CD4-positive, alpha-beta T cell (primary cell): ENCODE measurements at regions of chr9 and their contacts with region 1.

Region 1: GRCh38 chr9:105127863-105128220 is 116.6 kb upstream of the SLC44A1 start:
- DNase-seq: peak; percentile 30 to 92 (median 46)
- ATAC-seq: peak; percentile 99
- H3K4me3 ChIP-seq: peak overlapping the region; percentile 3
- H3K4me3 Mint-ChIP-seq: peak overlapping the region; percentile 31
- H3K27ac ChIP-seq: no peak overlapping the region
- H3K27ac Mint-ChIP-seq: peak overlapping the region; percentile 73
- H3K4me1 ChIP-seq: peaks cover 55% of the 10 kb centered on the region
- H3K4me1 Mint-ChIP-seq: peaks cover 65% of the 10 kb centered on the region
- H3K27me3 ChIP-seq: no peaks in the 10 kb centered on the region
- H3K27me3 Mint-ChIP-seq: no peaks in the 10 kb centered on the region
- CTCF ChIP-seq: no peak

Region 2: DNA sequence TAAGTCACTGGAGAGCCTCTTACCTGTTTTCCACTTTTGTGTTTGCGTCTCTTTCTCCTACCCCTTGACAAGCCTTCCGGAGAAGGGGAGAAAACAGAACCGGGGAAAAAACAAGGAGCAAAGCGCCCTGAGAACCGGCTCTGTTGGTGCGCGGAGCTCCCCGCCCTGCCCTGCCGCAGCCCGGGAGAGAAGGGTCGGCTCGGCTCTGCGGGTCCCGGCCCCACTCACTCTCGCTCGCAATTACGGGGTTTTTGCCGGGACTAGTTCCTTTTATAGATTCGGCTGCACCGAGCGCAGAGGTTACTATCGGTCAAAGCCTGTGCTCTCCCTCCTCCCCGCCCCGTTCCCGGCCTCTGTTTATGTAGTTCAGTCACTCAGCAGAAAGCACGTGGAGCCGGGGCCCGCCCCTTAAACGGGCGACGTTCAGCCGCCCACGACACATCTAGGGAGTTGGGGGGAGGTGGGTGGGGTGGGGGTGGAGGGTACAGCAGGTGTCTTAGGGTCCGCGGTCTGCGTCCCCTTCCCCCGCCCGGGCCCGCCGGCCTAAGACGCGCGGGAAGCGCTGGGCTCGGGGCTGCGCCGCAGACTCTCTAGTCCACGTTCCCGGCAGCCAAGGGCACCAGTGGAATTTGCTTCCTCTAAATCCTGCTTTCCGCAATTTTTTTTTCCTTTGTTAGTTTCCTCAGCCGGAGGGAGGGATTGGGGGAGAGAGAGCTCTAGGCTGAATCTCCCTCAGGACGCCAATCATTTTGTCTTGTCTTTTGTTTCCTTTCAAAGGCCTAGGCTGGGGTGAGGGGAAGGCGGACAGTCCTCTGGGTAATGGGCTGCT is 199.7 kb before region 1 on chr9 and contains the start of gene ABCA1:
- CTCF ChIA-PET with region 1: interaction called, 7 read pairs
- POLR2A ChIA-PET with region 1: interaction called, 6 read pairs
- intact Hi-C with region 1: loop called (anchors 2 to 5 kb)
- DNase-seq: peak; percentile 57 to 89 (median 74)
- ATAC-seq: peak; percentile 81
- H3K4me3 ChIP-seq: peak within 1 kb of the TSS; percentile 69
- H3K4me3 Mint-ChIP-seq: peak within 1 kb of the TSS; percentile 92
- H3K27ac ChIP-seq: peak within 1 kb of the TSS in 1 of 2 donors; percentile 15
- H3K27ac Mint-ChIP-seq: peak within 1 kb of the TSS; percentile 86
- H3K4me1 ChIP-seq: peaks cover 27% of the 10 kb centered on the region
- H3K4me1 Mint-ChIP-seq: peaks cover 26% of the 10 kb centered on the region
- H3K27me3 ChIP-seq: no peaks in the 10 kb centered on the region
- H3K27me3 Mint-ChIP-seq: no peaks in the 10 kb centered on the region
- CTCF ChIP-seq: no peak
- total RNA-seq, gene ABCA1: 14.1 to 16.9 TPM

Region 3: DNA sequence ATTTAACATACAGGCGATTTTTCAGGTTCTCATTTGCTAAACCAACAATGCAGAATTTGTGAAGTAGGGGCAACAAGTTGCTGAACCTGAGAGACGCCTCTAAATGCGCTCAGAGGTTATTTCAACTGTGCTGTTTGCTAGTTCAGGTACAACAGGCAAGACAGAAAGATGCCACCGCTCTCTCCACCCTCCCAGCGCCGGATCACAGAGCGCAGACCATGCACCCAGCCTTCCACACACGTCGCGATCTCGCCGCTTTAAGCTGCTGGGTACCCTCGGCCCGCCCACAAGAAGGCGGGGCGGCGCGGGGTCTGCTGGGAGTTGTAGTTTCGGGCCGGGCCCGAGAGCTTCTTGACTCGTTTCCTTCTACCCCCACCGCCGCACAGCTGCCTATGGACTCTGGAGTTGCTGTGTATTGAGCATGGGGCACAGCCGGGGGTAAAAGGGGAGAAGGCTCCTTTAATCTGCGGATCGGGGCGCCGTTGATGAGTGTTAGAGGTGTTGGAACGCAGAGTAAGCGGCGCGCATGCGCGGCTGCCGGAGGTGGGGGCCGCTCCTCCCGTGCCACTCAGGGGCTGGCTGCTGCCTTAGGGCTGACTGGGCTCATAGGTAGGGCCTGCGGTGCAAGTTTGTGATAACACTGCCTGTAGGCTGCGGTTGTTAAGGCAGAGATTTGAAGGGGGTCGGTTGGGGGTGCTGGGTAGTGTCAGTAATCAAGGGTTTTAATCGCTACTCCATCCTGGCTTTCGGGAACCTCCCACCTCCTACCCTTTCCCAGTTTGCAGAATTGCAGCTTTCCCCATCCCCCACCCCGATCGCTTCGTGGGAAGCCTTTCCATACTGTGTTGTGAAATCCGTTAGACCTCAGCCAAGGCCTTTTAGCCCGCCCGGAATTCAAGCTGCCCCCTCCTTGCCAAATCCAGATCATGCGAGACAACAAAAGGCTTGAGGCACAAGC is 159.5 kb before region 1 on chr9:
- CTCF ChIA-PET with region 1: no interaction called
- POLR2A ChIA-PET with region 1: interaction called, 5 read pairs
- intact Hi-C with region 1: loop called in 1 of 2 experiments (anchors 2 kb)
- DNase-seq: peak; percentile 80 to 92 (median 86)
- ATAC-seq: peak; percentile 97
- H3K4me3 ChIP-seq: peak overlapping the region; percentile 75
- H3K4me3 Mint-ChIP-seq: peak overlapping the region; percentile 95
- H3K27ac ChIP-seq: no peak overlapping the region
- H3K27ac Mint-ChIP-seq: peak overlapping the region; percentile 77
- H3K4me1 ChIP-seq: peaks cover 14% of the 10 kb centered on the region
- H3K4me1 Mint-ChIP-seq: peaks cover 27% of the 10 kb centered on the region
- H3K27me3 ChIP-seq: no peaks in the 10 kb centered on the region
- H3K27me3 Mint-ChIP-seq: peaks cover 8% of the 10 kb centered on the region
- CTCF ChIP-seq: no peak

Region 4: DNA sequence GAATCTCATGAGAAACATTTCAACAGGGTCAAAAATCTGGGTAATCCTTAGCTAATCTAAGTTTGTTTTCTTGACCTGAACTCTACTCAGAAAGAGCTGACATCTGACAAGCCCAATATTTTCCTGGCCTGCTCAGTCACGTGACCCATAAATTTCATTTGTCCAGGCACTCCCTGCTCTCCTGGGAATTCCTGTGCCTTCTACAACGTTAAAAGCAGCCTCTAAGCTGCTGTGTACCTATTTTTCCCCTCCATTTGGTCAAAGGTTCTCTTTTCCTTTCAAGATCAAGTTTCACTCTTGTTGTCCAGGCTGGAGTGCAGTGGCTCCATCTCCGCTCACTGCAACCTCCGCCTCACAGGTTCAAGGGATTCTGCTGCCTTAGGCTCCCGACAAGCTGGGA is 51.1 kb before region 1 on chr9:
- CTCF ChIA-PET with region 1: no interaction called
- POLR2A ChIA-PET with region 1: no interaction called
- intact Hi-C with region 1: no loop called
- DNase-seq: no peak
- ATAC-seq: no peak
- H3K4me3 ChIP-seq: no peak overlapping the region
- H3K4me3 Mint-ChIP-seq: no peak overlapping the region
- H3K27ac ChIP-seq: no peak overlapping the region
- H3K27ac Mint-ChIP-seq: no peak overlapping the region
- H3K4me1 ChIP-seq: no peaks in the 10 kb centered on the region
- H3K4me1 Mint-ChIP-seq: no peaks in the 10 kb centered on the region
- H3K27me3 ChIP-seq: no peaks in the 10 kb centered on the region
- H3K27me3 Mint-ChIP-seq: no peaks in the 10 kb centered on the region
- CTCF ChIP-seq: no peak

Region 5: DNA sequence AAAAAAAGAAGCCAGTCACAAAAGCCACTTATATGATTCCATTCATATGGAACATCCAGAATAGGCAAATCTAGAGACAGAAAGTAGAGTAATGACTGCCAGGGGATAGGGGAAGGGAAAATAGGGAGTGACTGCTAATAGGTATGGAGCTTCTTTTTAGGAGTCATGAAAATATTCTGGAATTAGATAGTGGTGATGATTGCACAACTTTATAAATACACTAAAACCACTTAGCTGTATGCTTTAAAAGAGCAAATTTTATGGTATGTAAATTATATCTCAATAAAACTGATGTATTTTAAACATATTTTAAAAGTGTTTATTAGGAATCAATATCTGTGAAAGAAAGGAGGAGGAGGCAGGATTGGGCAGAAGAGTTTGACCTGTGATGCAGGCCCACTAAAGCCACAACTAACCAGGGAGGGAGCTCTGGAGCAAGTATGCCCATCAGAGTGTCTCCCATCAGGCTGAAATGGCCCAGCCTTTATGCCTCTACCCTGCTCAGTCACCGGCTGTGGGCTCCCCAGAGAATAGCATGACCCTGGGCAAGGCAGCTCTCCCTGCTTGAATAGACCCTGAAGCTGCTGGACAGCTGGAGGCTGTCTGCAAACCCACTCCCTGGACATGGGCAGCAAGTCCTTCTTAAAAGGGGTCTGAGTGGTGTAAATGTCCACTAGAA is 20.6 kb after region 1 on chr9:
- CTCF ChIA-PET with region 1: no interaction called
- POLR2A ChIA-PET with region 1: no interaction called
- intact Hi-C with region 1: loop called in 1 of 2 experiments (anchors 2 kb)
- DNase-seq: no peak
- ATAC-seq: no peak
- H3K4me3 ChIP-seq: no peak overlapping the region
- H3K4me3 Mint-ChIP-seq: no peak overlapping the region
- H3K27ac ChIP-seq: no peak overlapping the region
- H3K27ac Mint-ChIP-seq: no peak overlapping the region
- H3K4me1 ChIP-seq: no peaks in the 10 kb centered on the region
- H3K4me1 Mint-ChIP-seq: peaks cover 31% of the 10 kb centered on the region
- H3K27me3 ChIP-seq: no peaks in the 10 kb centered on the region
- H3K27me3 Mint-ChIP-seq: no peaks in the 10 kb centered on the region
- CTCF ChIP-seq: no peak

Region 6: GRCh38 chr9:105405514-105406131 is 277.8 kb after region 1 on chr9:
- CTCF ChIA-PET with region 1: no interaction called
- POLR2A ChIA-PET with region 1: interaction called, 8 read pairs
- intact Hi-C with region 1: loop called in 1 of 2 experiments (anchors 2 kb)
- DNase-seq: peak in 13 of 14 experiments; percentile 20 to 87 (median 43)
- ATAC-seq: peak; percentile 90
- H3K4me3 ChIP-seq: no peak overlapping the region
- H3K4me3 Mint-ChIP-seq: peak overlapping the region; percentile 21
- H3K27ac ChIP-seq: no peak overlapping the region
- H3K27ac Mint-ChIP-seq: peak overlapping the region; percentile 70
- H3K4me1 ChIP-seq: peaks cover 24% of the 10 kb centered on the region
- H3K4me1 Mint-ChIP-seq: peaks cover 33% of the 10 kb centered on the region
- H3K27me3 ChIP-seq: peaks cover 25 to 33% of the 10 kb centered on the region in 2 experiments
- H3K27me3 Mint-ChIP-seq: peaks cover 73% of the 10 kb centered on the region
- CTCF ChIP-seq: no peak